PC-9 (cell line): ENCODE measurements at regions of chr10 and their contacts with region 1.

Region 1: GRCh38 chr10:53233749-53234148 is 461.2 kb upstream of the MBL2 start:
- DNase-seq: no peak
- H3K4me3 ChIP-seq: no peak overlapping the region
- H3K27ac ChIP-seq: no peak overlapping the region
- H3K4me1 ChIP-seq: no peaks in the 10 kb centered on the region
- H3K27me3 ChIP-seq: no peaks in the 10 kb centered on the region
- CTCF ChIP-seq: no peak

Region 2: DNA sequence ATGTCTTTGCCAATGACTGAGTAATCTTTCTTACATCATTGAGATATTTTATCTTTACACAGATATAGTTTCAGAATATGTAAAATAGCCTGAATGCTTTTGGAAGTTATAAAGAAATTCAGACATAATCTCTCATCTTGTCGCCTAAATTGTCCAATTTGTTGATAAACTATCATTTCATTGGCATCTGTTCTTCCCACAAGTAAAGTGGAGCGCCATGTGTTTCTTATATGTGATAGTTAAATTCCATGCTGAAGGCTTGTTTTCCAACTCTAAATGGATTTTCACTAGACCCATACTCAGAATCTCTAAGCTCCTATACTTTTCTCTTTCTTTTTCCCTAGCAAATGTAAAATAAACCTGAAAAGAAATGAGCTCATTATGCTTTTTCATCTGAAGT is 178.9 kb after region 1 on chr10:
- CTCF ChIA-PET with region 1: no interaction called
- POLR2A ChIA-PET with region 1: interaction called, 10 read pairs
- intact Hi-C with region 1: no loop called
- DNase-seq: no peak
- H3K4me3 ChIP-seq: no peak overlapping the region
- H3K27ac ChIP-seq: no peak overlapping the region
- H3K4me1 ChIP-seq: no peaks in the 10 kb centered on the region
- H3K27me3 ChIP-seq: no peaks in the 10 kb centered on the region
- CTCF ChIP-seq: no peak